AG04449 (cell line): ENCODE measurements at regions of chr13 and their contacts with region 1.

Region 1: DNA sequence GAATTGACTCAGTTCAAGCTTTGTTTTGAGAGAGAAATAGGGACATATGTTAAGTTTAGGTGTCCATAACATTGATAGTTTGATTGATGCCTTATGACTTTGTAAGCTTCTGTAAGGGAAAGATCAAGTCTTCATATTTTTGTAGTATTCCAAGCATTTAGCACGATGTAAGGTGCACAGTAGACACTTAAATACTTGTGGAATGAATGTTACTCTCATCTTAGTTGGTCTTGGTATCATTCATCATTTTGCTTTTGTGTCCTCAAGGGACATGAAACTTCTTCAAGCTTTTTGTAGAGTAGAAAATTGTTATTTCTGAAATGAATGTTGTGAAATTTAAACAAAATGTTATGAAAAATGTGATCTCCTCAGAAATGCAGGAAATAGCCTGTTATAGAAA is 10.1 kb downstream of the TDRD3 start:
- DNase-seq: no peak
- H3K4me3 ChIP-seq: no peak overlapping the region
- CTCF ChIP-seq: no peak

Region 2: DNA sequence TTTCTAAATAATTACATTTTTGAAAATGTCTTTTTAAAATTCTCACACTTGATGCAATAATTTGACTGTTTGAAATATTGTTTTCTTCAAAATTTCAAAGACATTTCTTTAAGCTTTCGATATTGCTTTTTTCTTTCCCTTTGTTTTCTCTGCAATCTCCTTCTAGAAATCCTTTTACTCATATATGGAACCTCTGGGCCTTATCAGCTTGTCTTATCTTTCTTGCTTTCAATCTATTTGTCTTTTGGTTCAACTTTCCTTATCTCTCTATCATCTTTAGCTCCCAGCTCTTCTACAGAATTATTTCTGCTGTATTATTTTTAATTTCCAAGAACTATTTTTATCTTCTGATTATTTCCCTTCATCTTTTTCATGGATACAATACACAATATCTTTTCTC is 162.7 kb before region 1 on chr13:
- CTCF ChIA-PET with region 1: no interaction called
- POLR2A ChIA-PET with region 1: no interaction called
- DNase-seq: no peak
- H3K4me3 ChIP-seq: no peak overlapping the region
- CTCF ChIP-seq: no peak

Region 3: GRCh38 chr13:60396783-60397703 is 10.1 kb before region 1 on chr13 and contains the start of gene TDRD3:
- CTCF ChIA-PET with region 1: interaction called, 10 read pairs
- POLR2A ChIA-PET with region 1: no interaction called
- DNase-seq: no peak
- H3K4me3 ChIP-seq: peak within 1 kb of the TSS; percentile 82
- CTCF ChIP-seq: peak; percentile 85